ENCODE measurements at regions of chr4 and their contacts with region 1.

Region 1: GRCh38 chr4:118086344-118086743 is 52.1 kb downstream of the NDST3 start:
- DNase-seq: peak; percentile 88
- H3K4me3 ChIP-seq: no peak overlapping the region
- H3K27ac ChIP-seq: no peak overlapping the region
- H3K4me1 ChIP-seq: peaks cover 21% of the 10 kb centered on the region
- H3K27me3 ChIP-seq: no peaks in the 10 kb centered on the region
- CTCF ChIP-seq: no peak
- POLR2A ChIP-seq: no peak

Region 2: GRCh38 chr4:118113220-118113619 is 26.9 kb after region 1 on chr4:
- CTCF ChIA-PET with region 1: interaction called, 11 read pairs
- POLR2A ChIA-PET with region 1: no interaction called
- dilution Hi-C with region 1: no loop called
- intact Hi-C with region 1: no loop called
- DNase-seq: peak; percentile 23
- H3K4me3 ChIP-seq: no peak overlapping the region
- H3K27ac ChIP-seq: no peak overlapping the region
- H3K4me1 ChIP-seq: peaks cover 4% of the 10 kb centered on the region
- H3K27me3 ChIP-seq: no peaks in the 10 kb centered on the region
- CTCF ChIP-seq: no peak
- POLR2A ChIP-seq: no peak

Region 3: GRCh38 chr4:118173956-118174725 is 87.8 kb after region 1 on chr4:
- CTCF ChIA-PET with region 1: no interaction called
- POLR2A ChIA-PET with region 1: no interaction called
- dilution Hi-C with region 1: no loop called
- intact Hi-C with region 1: loop called (anchors 5 kb)
- DNase-seq: peak; percentile 60
- H3K4me3 ChIP-seq: no peak overlapping the region
- H3K27ac ChIP-seq: no peak overlapping the region
- H3K4me1 ChIP-seq: peaks cover 5% of the 10 kb centered on the region
- H3K27me3 ChIP-seq: no peaks in the 10 kb centered on the region
- CTCF ChIP-seq: no peak
- POLR2A ChIP-seq: no peak